MCF 10A (cell line): ENCODE measurements at regions of chr3 and their contacts with region 1.

Region 1: GRCh38 chr3:137110484-137110883 is 152.7 kb downstream of the IL20RB start:
- DNase-seq: peak; percentile 50
- H3K4me3 Mint-ChIP-seq: no peak overlapping the region
- H3K27ac Mint-ChIP-seq: no peak overlapping the region
- H3K4me1 Mint-ChIP-seq: no peaks in the 10 kb centered on the region
- H3K27me3 Mint-ChIP-seq: no peaks in the 10 kb centered on the region
- CTCF ChIP-seq: peak; percentile 77

Region 2: DNA sequence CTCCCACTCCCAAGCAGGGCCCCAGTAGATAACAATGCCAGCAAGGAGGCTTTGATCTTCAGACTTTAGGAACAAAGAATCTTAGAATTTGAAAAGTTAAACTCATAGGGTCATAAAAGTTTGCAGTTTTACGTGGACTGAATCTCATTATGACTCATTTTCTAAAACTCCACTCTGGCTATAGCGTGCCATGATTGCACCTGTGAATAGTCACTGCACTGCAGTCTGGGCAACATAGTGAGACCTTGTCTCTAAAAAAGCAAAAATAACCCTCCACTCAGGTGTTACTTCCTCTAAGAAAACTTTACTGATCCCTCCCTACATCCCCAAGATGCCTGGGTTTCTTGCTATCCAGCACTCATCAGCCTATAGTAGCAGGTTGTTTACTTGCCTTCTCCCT is 48.2 kb before region 1 on chr3:
- CTCF ChIA-PET with region 1: no interaction called
- POLR2A ChIA-PET with region 1: no interaction called
- intact Hi-C with region 1: no loop called
- DNase-seq: no peak
- H3K4me3 Mint-ChIP-seq: no peak overlapping the region
- H3K27ac Mint-ChIP-seq: no peak overlapping the region
- H3K4me1 Mint-ChIP-seq: peaks cover 7% of the 10 kb centered on the region
- H3K27me3 Mint-ChIP-seq: no peaks in the 10 kb centered on the region
- CTCF ChIP-seq: no peak

Region 3: GRCh38 chr3:137099364-137100219 is 10.9 kb before region 1 on chr3:
- CTCF ChIA-PET with region 1: interaction called, 33 read pairs
- POLR2A ChIA-PET with region 1: interaction called, 3 read pairs
- intact Hi-C with region 1: no loop called
- DNase-seq: no peak
- H3K4me3 Mint-ChIP-seq: no peak overlapping the region
- H3K27ac Mint-ChIP-seq: no peak overlapping the region
- H3K4me1 Mint-ChIP-seq: no peaks in the 10 kb centered on the region
- H3K27me3 Mint-ChIP-seq: no peaks in the 10 kb centered on the region
- CTCF ChIP-seq: no peak

Region 4: GRCh38 chr3:137121704-137122314 is 11.3 kb after region 1 on chr3:
- CTCF ChIA-PET with region 1: interaction called, 11 read pairs
- POLR2A ChIA-PET with region 1: interaction called, 3 read pairs
- intact Hi-C with region 1: no loop called
- DNase-seq: peak; percentile 58
- H3K4me3 Mint-ChIP-seq: no peak overlapping the region
- H3K27ac Mint-ChIP-seq: no peak overlapping the region
- H3K4me1 Mint-ChIP-seq: no peaks in the 10 kb centered on the region
- H3K27me3 Mint-ChIP-seq: no peaks in the 10 kb centered on the region
- CTCF ChIP-seq: peak; percentile 52

Region 5: DNA sequence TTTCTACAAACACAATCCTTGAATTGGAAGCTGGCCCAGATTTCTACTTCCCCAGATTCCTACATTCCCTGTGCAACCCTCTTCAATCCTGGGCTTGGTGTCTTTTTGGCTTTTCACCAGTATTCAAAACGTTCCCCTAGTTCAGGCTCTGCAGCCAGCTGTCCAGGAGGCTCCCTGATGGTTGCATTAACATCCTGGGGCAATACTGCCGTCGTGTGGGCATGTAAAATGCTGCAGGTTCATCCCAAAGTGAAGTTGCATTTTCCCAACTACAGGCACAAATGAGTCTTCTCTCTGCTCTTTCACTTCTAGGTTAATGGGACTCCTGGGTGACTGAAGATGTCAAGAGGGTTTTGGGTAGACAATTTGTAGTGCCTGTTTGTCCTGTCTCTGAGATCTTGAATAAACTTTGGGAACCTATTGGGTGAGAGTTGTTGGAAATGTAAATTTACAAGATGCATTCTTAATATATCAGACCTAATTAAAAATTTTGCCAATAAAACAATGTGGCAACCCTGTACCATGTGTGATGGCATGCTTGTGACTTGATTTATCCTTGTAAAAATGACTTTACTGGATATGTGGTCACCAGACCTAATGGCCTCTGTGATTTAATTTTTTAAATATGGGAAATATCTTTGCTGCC is 682.3 kb after region 1 on chr3:
- CTCF ChIA-PET with region 1: interaction called, 4 read pairs
- POLR2A ChIA-PET with region 1: no interaction called
- intact Hi-C with region 1: loop called (anchors 10 kb)
- DNase-seq: peak; percentile 49
- H3K4me3 Mint-ChIP-seq: no peak overlapping the region
- H3K27ac Mint-ChIP-seq: no peak overlapping the region
- H3K4me1 Mint-ChIP-seq: no peaks in the 10 kb centered on the region
- H3K27me3 Mint-ChIP-seq: peaks cover 74% of the 10 kb centered on the region
- CTCF ChIP-seq: peak; percentile 52

Region 6: GRCh38 chr3:137970914-137971831 is 860.7 kb after region 1 on chr3:
- CTCF ChIA-PET with region 1: interaction called, 27 read pairs
- POLR2A ChIA-PET with region 1: interaction called, 3 read pairs
- intact Hi-C with region 1: loop called (anchors 1 kb)
- DNase-seq: peak; percentile 80
- H3K4me3 Mint-ChIP-seq: no peak overlapping the region
- H3K27ac Mint-ChIP-seq: no peak overlapping the region
- H3K4me1 Mint-ChIP-seq: no peaks in the 10 kb centered on the region
- H3K27me3 Mint-ChIP-seq: no peaks in the 10 kb centered on the region
- CTCF ChIP-seq: peak; percentile 88